ENCODE measurements at regions of chr4 and their contacts with region 1.

Region 1: DNA sequence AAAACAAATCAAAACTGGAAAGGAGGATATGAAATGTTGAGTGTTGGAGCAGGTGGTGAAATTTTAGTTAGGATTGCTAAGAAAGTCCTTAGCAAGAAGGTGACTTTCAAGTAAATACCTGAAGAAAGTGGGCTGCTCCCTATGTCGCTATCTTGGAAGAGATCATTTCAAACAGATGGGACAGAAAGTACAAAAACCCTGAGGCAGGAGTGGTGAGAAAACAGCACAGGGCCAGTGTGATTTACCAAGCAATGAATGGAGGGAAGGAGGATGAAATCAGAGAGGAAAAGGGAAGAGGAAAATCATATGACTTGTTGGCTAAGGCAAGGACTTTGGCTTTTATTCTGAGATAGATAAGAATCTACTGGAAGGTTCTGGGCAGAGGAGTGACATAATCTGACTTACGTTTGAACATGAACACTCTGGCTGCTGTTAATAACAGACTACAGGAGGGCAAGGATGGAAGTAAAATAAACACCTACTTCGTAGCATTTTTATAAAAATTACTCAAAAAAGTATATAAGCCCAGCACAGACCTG is 207.7 kb upstream of the SLC7A11 start:
- DNase-seq: no peak
- ATAC-seq: no peak
- H3K4me3 ChIP-seq: no peak overlapping the region
- H3K4me3 Mint-ChIP-seq: no peak overlapping the region
- H3K27ac ChIP-seq: no peak overlapping the region
- H3K27ac Mint-ChIP-seq: no peak overlapping the region
- H3K4me1 ChIP-seq: no peaks in the 10 kb centered on the region
- H3K4me1 Mint-ChIP-seq: no peaks in the 10 kb centered on the region
- H3K27me3 ChIP-seq: peaks cover 0 to 2% of the 10 kb centered on the region in 2 experiments
- H3K27me3 Mint-ChIP-seq: no peaks in the 10 kb centered on the region

Region 2: GRCh38 chr4:138367942-138368341 is 81.9 kb before region 1 on chr4:
- CTCF ChIA-PET with region 1: interaction called in 1 of 2 experiments, 15 read pairs
- POLR2A ChIA-PET with region 1: no interaction called
- DNase-seq: no peak
- ATAC-seq: no peak
- H3K4me3 ChIP-seq: no peak overlapping the region
- H3K4me3 Mint-ChIP-seq: no peak overlapping the region
- H3K27ac ChIP-seq: no peak overlapping the region
- H3K27ac Mint-ChIP-seq: no peak overlapping the region
- H3K4me1 ChIP-seq: no peaks in the 10 kb centered on the region
- H3K4me1 Mint-ChIP-seq: no peaks in the 10 kb centered on the region
- H3K27me3 ChIP-seq: no peaks in the 10 kb centered on the region
- H3K27me3 Mint-ChIP-seq: no peaks in the 10 kb centered on the region

Region 3: DNA sequence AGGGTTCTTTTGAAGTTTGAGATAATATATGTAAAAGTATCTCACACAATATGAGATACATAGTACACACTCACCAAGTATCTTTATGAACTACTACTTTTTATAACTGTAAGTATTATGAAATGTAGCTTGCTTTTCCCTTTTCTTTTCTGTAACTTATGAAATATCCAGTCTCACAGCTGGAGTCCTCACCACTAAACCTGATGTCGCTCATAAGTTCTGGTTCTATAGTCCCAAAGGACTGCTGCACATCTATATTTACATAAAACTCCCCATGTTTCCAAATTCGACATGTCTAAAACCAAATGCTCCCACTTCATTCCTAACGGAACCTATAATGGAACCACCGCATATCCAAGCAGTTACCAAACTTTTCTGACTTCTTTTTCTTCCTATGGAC is 21.3 kb before region 1 on chr4:
- CTCF ChIA-PET with region 1: no interaction called
- POLR2A ChIA-PET with region 1: no interaction called
- DNase-seq: no peak
- ATAC-seq: no peak
- H3K4me3 ChIP-seq: no peak overlapping the region
- H3K4me3 Mint-ChIP-seq: no peak overlapping the region
- H3K27ac ChIP-seq: no peak overlapping the region
- H3K27ac Mint-ChIP-seq: no peak overlapping the region
- H3K4me1 ChIP-seq: no peaks in the 10 kb centered on the region
- H3K4me1 Mint-ChIP-seq: no peaks in the 10 kb centered on the region
- H3K27me3 ChIP-seq: peaks cover 0 to 7% of the 10 kb centered on the region in 2 experiments
- H3K27me3 Mint-ChIP-seq: no peaks in the 10 kb centered on the region